ENCODE measurements at regions of chr5 and their contacts with region 1.

Region 1: GRCh38 chr5:108345541-108346171 is 36.2 kb downstream of the FBXL17 start:
- DNase-seq: no peak
- ATAC-seq: peak; percentile 61
- H3K4me3 Mint-ChIP-seq: no peak overlapping the region
- H3K27ac Mint-ChIP-seq: no peak overlapping the region
- H3K4me1 Mint-ChIP-seq: no peaks in the 10 kb centered on the region
- H3K27me3 Mint-ChIP-seq: no peaks in the 10 kb centered on the region

Region 2: DNA sequence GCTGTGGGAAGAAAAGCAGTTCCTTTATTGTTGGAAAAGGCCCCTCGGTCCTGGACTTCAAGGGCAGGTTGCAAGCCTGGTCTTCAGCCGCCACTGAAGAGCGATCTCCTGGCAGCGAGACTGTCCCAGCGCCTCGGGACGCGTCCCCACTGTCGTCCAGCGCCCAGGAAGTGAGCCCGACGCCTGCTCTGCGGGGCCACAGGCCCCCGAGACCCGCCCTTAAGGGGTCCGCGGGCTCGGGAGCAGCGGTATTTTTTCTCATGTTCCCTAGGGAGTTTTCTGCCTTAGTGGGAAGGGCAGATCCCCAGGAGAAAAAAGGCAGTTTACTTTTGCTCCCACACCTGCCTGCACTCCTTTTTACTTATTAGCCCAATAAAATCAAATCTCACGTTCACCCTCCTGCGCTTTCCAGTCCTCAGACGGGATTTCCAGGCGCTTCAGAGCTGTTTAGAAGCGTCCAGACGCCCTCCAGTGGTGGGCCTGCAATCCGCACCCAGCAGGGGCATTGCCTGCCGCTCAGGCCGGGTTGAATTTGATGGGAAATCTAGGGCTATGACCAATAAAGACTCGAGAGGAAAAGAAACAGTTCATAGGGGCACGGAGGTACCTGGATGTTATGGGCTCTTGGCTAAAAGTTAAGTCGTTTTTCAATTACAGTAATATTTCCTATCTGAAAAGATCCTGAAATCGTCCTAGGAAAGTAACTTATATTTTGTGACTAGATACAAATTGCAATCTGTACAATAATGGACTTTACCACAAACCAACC is 672.1 kb before region 1 on chr5:
- CTCF ChIA-PET with region 1: interaction called, 5 read pairs
- POLR2A ChIA-PET with region 1: no interaction called
- intact Hi-C with region 1: loop called in 1 of 2 experiments (anchors 5 kb)
- DNase-seq: peak; percentile 90
- ATAC-seq: peak; percentile 76
- H3K4me3 Mint-ChIP-seq: peak overlapping the region; percentile 67
- H3K27ac Mint-ChIP-seq: no peak overlapping the region
- H3K4me1 Mint-ChIP-seq: peaks cover 31% of the 10 kb centered on the region
- H3K27me3 Mint-ChIP-seq: peaks cover 56% of the 10 kb centered on the region

Region 3: DNA sequence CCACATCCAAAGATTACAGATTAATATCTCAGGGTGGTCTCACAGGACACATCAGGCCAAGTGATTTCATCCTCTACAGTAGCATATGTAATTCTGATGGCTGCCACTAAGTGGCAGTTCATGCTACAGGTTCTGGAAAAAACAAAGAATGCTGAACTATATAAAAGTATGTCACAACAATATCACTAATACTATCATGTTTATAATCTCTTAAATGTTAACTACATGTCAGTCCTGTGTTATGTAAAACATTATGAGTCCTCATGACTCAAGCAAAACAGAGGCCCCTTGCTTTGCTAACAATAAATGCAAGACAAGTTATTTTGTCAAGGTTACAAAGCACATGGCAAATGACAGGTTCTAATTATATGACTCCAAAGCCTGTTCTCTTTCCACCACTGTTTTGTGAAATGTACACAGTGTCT is 196.9 kb before region 1 on chr5:
- CTCF ChIA-PET with region 1: no interaction called
- POLR2A ChIA-PET with region 1: no interaction called
- intact Hi-C with region 1: loop called in 1 of 2 experiments (anchors 1 kb)
- DNase-seq: no peak
- ATAC-seq: no peak
- H3K4me3 Mint-ChIP-seq: no peak overlapping the region
- H3K27ac Mint-ChIP-seq: no peak overlapping the region
- H3K4me1 Mint-ChIP-seq: no peaks in the 10 kb centered on the region
- H3K27me3 Mint-ChIP-seq: no peaks in the 10 kb centered on the region

Region 4: GRCh38 chr5:108260117-108260857 is 85.4 kb before region 1 on chr5:
- CTCF ChIA-PET with region 1: interaction called, 96 read pairs
- POLR2A ChIA-PET with region 1: no interaction called
- intact Hi-C with region 1: loop called (anchors 1 kb)
- DNase-seq: peak; percentile 83
- ATAC-seq: peak; percentile 90
- H3K4me3 Mint-ChIP-seq: peak overlapping the region; percentile 32
- H3K27ac Mint-ChIP-seq: no peak overlapping the region
- H3K4me1 Mint-ChIP-seq: peaks cover 12% of the 10 kb centered on the region
- H3K27me3 Mint-ChIP-seq: no peaks in the 10 kb centered on the region

Measured in activated CD4-positive, alpha-beta T cell treated with anti-CD3 and anti-CD28 coated beads for 36 hours (primary cell).